OCI-LY7 (cell line): ENCODE measurements at regions of chr21 and their contacts with region 1.

Region 1: DNA sequence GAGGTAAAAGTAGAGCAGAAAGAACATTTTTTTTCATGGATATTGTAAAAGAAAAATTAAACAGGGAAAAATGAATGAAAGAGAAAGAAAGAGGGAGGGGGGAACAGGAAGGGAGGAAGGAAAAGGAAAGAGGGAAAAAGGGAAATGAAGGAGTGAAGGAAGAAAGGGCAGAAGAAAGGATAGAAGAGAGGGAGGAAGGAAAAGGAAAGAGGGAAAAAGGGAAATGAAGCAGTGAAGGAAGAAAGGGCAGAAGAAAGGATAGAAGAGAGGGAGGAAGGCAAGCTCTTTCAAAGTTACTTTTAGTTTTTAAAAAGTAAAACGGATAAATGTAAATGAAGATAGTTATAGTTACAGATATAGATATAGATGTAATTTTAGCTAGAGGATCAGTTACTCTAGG is 1676.7 kb downstream of the MRPL39 start:
- DNase-seq: no peak
- H3K4me3 ChIP-seq: no peak overlapping the region
- H3K27ac ChIP-seq: no peak overlapping the region
- H3K4me1 ChIP-seq: no peaks in the 10 kb centered on the region
- CTCF ChIP-seq: no peak

Region 2: DNA sequence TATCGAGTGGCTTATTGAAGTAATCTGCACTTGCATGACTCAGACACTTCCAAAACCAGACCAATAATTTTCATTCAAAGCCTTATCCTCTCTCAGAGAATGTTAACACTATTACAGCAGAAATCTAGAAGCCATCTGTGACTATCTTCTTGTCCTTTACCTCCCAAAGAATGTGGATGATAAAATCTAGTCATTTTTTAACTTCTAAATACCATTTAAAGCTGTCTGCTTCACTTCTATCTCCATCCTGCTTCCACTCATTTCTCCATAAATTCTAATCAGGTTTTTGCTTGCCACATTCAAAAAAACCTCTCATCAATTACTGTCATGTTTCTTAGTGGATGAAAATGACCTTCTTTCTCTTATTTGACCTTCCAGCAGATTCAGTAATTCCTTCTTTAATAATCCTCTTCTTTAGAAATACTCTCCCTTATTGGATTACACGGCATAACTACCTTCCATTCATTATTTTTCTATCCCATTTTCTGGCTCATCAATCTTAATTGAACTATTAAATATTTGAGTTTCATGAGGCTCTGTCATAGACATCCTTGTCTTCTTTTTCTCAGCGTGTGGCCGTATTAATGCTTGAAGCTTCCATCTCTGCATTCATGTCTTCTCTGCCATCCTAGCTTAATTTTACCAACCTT is 322.7 kb before region 1 on chr21:
- CTCF ChIA-PET with region 1: no interaction called
- POLR2A ChIA-PET with region 1: no interaction called
- intact Hi-C with region 1: loop called (anchors 5 kb)
- DNase-seq: no peak
- H3K4me3 ChIP-seq: no peak overlapping the region
- H3K27ac ChIP-seq: no peak overlapping the region
- H3K4me1 ChIP-seq: no peaks in the 10 kb centered on the region
- CTCF ChIP-seq: no peak